Stomach (tissue), 19 donors: ENCODE measurements at regions of chr12 and their contacts with region 1.

Region 1: DNA sequence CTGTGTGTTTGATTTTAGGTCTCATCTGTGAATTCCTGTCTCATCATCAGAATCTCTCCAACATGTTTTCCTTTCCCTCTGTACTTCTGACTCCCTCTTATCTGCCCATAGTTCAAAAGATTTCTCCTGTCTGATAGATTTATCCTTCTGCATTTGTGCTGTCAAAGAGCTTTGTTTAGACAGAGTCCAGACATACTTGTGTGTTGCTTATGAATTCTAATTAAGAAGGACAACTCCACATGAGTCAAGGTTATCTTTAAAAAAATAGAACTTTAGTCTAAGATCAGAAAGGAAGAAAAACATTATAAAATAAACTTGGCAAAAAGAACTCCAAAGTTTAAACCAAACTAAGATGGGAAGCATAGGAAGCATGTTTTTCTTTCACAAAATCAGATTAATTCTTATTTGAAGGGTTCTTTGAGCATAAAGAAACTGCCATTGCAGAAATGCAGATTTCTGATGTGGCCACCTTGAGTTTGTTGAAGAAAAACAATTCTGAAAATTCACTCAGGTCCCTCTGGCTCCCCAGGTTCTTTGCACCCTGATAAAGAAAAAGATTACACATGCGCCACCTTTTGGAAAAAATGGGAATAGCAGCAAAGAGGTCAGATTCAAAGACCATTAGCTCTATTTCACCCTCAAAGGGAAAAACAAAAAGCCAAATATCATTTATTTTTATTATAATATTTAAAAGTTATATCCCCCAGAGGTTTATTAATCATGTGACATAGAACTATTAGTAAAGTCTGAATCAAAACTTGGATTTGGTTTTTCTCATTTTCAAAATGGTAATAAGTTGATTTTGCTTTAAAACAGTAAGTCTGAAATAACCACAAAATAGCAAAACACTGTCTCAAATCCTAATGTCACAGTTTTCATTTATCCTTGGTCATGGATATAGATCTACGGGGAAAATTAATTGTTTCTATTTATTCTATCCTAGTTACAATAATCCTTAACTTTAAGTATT is 143.7 kb upstream of the DCN start:
- DNase-seq: peak; percentile 33 to 84
- H3K4me3 ChIP-seq: no peak overlapping the region
- H3K27ac ChIP-seq: peak overlapping the region in 4 of 5 donors; percentile 23 to 61 (median 42)
- H3K4me1 ChIP-seq: peaks cover 0 to 5% (median 0%) of the 10 kb centered on the region in 4 donors
- H3K27me3 ChIP-seq: no peaks in the 10 kb centered on the region
- CTCF ChIP-seq: peak in 5 of 7 experiments; percentile 14 to 84 (median 71)
- EP300 ChIP-seq: no peak
- POLR2A ChIP-seq: no peak

Region 2: GRCh38 chr12:90925562-90925961 is 400.8 kb before region 1 on chr12:
- intact Hi-C with region 1: no loop called
- DNase-seq: no peak
- H3K4me3 ChIP-seq: no peak overlapping the region
- H3K27ac ChIP-seq: no peak overlapping the region
- H3K4me1 ChIP-seq: no peaks in the 10 kb centered on the region
- H3K27me3 ChIP-seq: no peaks in the 10 kb centered on the region
- CTCF ChIP-seq: no peak
- EP300 ChIP-seq: no peak
- POLR2A ChIP-seq: no peak

Region 3: GRCh38 chr12:91178139-91178561 is 148.2 kb before region 1 on chr12:
- intact Hi-C with region 1: loop called (anchors 10 kb)
- DNase-seq: peak in 1 of 2 donors; percentile 63
- H3K4me3 ChIP-seq: peak overlapping the region; percentile 23 to 47 (median 31)
- H3K27ac ChIP-seq: peak overlapping the region; percentile 20 to 74 (median 65)
- H3K4me1 ChIP-seq: peaks cover 0 to 5% (median 0%) of the 10 kb centered on the region in 4 donors
- H3K27me3 ChIP-seq: no peaks in the 10 kb centered on the region
- CTCF ChIP-seq: peak in 5 of 7 experiments; percentile 24 to 60 (median 33)
- EP300 ChIP-seq: no peak
- POLR2A ChIP-seq: no peak

Region 4: DNA sequence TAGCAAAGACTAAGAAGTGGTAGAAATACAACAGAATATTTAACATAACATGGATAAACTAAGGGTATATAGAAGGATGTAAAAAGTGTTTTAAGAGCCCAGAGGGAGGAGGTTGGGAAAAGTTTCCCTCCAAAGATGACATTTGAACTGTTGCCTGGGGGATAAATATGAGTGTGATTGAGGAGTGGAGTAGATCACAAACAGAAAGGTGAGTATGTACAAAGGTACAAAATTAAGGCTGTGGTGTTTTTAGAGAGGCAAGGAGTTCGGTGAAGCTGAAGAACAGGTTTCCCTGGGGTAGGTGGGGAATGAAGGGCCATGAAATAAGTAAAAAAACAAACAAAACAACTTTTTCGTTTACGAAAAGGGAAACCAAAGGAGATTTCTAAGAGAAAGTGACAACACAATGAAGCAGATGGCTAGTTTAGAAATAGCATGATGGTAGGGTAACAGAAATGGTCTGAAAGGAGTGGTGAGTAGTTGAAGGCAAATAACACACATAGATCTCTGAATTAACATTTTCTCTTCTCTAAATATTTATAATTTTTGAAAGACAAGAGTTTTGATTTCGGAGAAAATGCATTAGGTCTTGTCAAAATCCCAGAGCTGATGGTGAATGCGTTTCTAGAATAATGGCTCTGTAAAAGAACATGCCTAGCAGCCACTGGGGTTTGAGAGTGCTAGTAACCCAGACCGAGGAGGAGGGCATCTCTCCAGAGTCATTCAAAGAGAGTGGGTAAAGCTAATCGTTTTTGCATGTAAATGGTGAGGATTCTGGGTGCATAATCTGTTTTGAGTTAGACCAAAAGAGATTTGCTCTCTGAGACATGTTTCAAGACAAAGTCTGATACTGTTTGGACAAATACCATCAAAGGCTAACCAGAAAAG is 96.7 kb after region 1 on chr12:
- intact Hi-C with region 1: no loop called
- DNase-seq: peak in 1 of 2 donors; percentile 27
- H3K4me3 ChIP-seq: no peak overlapping the region
- H3K27ac ChIP-seq: no peak overlapping the region
- H3K4me1 ChIP-seq: peaks cover 0 to 10% (median 0%) of the 10 kb centered on the region in 4 donors
- H3K27me3 ChIP-seq: no peaks in the 10 kb centered on the region
- CTCF ChIP-seq: no peak
- EP300 ChIP-seq: no peak
- POLR2A ChIP-seq: no peak